ENCODE measurements at regions of chrX and their contacts with region 1.

Region 1: GRCh38 chrX:117996918-117997480 is 119.6 kb downstream of the KLHL13 start:
- DNase-seq: peak; percentile 63
- ATAC-seq: peak; percentile 74
- H3K4me3 ChIP-seq: no peak overlapping the region
- H3K27ac ChIP-seq: no peak overlapping the region
- H3K4me1 ChIP-seq: 0 out of 2 replicates have a peak, but pooled peaks cover 2% of the 10 kb centered on the region
- H3K27me3 ChIP-seq: no peaks in the 10 kb centered on the region
- CTCF ChIP-seq: peak; percentile 59
- POLR2A ChIP-seq: no peak
- RAD21 ChIP-seq: peak; percentile 72

Region 2: GRCh38 chrX:118116713-118117550 is 119.9 kb after region 1 on chrX and contains the start of gene KLHL13:
- CTCF ChIA-PET with region 1: no interaction called
- POLR2A ChIA-PET with region 1: no interaction called
- dilution Hi-C with region 1: no loop called
- in situ Hi-C with region 1: no loop called
- intact Hi-C with region 1: loop called (anchors 5 kb)
- DNase-seq: peak; percentile 18
- ATAC-seq: peak; percentile 84
- H3K4me3 ChIP-seq: peak within 1 kb of the TSS; percentile 84
- H3K27ac ChIP-seq: peak within 1 kb of the TSS; percentile 83
- H3K4me1 ChIP-seq: 0 out of 2 replicates have a peak, but pooled peaks cover 2% of the 10 kb centered on the region
- H3K27me3 ChIP-seq: no peaks in the 10 kb centered on the region
- CTCF ChIP-seq: no peak
- POLR2A ChIP-seq: no peak
- RAD21 ChIP-seq: no peak
- total RNA-seq, gene KLHL13: 12.5 and 13.6 TPM in 2 replicates

Region 3: GRCh38 chrX:118181030-118181429 is 184.0 kb after region 1 on chrX:
- CTCF ChIA-PET with region 1: no interaction called
- POLR2A ChIA-PET with region 1: no interaction called
- dilution Hi-C with region 1: no loop called
- in situ Hi-C with region 1: no loop called
- intact Hi-C with region 1: no loop called
- DNase-seq: peak; percentile 13
- ATAC-seq: no peak
- H3K4me3 ChIP-seq: no peak overlapping the region
- H3K27ac ChIP-seq: no peak overlapping the region
- H3K4me1 ChIP-seq: no peaks in the 10 kb centered on the region
- H3K27me3 ChIP-seq: no peaks in the 10 kb centered on the region
- CTCF ChIP-seq: no peak
- POLR2A ChIP-seq: no peak
- RAD21 ChIP-seq: no peak

Region 4: DNA sequence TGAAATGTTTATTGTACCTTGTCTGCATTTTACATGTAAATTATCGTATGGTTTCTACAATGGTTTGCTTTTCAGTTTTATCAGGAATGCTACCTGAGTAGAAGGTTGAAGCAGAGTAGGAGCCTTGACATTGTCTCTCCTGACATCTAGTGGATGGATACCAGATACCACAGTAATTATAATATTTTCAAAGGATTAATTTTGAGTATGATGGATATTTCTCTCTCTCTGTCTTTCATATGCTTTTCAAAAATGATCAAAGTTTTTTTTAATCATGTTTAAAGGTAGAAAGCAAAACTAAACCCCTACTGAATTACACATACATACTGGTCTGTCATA is 229.1 kb after region 1 on chrX:
- CTCF ChIA-PET with region 1: interaction called, 4 read pairs
- POLR2A ChIA-PET with region 1: no interaction called
- dilution Hi-C with region 1: no loop called
- in situ Hi-C with region 1: no loop called
- intact Hi-C with region 1: loop called (anchors 1 kb)
- DNase-seq: no peak
- ATAC-seq: peak; percentile 67
- H3K4me3 ChIP-seq: no peak overlapping the region
- H3K27ac ChIP-seq: no peak overlapping the region
- H3K4me1 ChIP-seq: no peaks in the 10 kb centered on the region
- H3K27me3 ChIP-seq: no peaks in the 10 kb centered on the region
- CTCF ChIP-seq: peak; percentile 52
- POLR2A ChIP-seq: no peak
- RAD21 ChIP-seq: peak; percentile 63

Region 5: DNA sequence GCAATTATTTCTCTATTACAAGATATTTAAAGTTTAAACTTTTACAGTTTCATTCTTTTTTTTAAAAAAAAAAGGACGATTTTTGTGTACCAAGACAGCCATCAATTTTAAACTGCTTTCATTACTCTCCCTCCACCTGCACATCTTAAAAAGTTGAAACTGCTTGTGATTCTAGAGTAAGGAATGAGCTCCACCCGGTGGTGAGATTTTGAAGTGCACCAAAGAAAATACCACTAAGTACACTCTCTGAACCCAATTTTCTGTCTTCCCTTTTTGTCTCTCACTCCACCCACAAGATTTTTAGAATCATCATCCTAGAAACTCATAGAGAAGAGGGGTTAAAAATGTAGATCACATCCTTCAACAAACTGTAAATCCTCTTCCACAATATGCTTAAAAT is 257.6 kb after region 1 on chrX:
- CTCF ChIA-PET with region 1: interaction called, 3 read pairs
- POLR2A ChIA-PET with region 1: no interaction called
- dilution Hi-C with region 1: no loop called
- in situ Hi-C with region 1: loop called (anchors 10 kb)
- intact Hi-C with region 1: loop called (anchors 1 kb)
- DNase-seq: peak; percentile 57
- ATAC-seq: peak; percentile 63
- H3K4me3 ChIP-seq: no peak overlapping the region
- H3K27ac ChIP-seq: no peak overlapping the region
- H3K4me1 ChIP-seq: peaks cover 1% of the 10 kb centered on the region; the same call in 1 of the 2 replicates
- H3K27me3 ChIP-seq: peaks cover 7% of the 10 kb centered on the region; the same call in 1 of the 2 replicates
- CTCF ChIP-seq: peak; percentile 68
- POLR2A ChIP-seq: no peak
- RAD21 ChIP-seq: peak; percentile 76